PC-9 (cell line): ENCODE measurements at regions of chr7 and their contacts with region 1.

Region 1: DNA sequence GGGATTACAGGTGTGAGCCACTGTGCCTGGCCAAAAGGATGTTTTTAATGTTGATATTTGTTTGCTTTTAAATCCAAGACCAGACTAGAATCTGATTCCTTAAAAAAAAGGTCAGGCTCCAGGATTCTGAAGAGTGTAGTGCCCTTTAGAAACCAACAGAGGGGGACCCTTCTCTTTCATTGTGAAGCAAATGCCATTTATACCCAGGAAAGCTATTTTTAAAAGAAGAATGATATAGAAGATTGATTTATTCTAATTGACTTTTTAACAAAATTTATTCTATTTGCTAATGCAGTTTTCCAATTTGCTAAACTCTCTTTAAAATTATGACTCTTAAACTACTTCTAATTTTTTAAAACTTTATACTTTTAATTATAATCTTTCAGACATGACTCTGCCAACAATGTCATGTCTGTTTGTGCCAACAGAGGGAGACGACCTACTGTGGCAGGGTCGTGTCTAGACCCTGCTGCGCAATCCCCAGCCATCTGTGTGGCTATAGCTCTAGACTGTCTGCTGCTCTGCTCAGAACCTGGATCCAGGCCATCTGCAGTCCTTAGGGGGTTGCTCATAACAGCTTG is 201.0 kb upstream of the IMMP2L start:
- DNase-seq: no peak
- H3K4me3 ChIP-seq: no peak overlapping the region
- H3K27ac ChIP-seq: no peak overlapping the region
- H3K4me1 ChIP-seq: no peaks in the 10 kb centered on the region
- H3K27me3 ChIP-seq: no peaks in the 10 kb centered on the region
- CTCF ChIP-seq: peak; percentile 88

Region 2: DNA sequence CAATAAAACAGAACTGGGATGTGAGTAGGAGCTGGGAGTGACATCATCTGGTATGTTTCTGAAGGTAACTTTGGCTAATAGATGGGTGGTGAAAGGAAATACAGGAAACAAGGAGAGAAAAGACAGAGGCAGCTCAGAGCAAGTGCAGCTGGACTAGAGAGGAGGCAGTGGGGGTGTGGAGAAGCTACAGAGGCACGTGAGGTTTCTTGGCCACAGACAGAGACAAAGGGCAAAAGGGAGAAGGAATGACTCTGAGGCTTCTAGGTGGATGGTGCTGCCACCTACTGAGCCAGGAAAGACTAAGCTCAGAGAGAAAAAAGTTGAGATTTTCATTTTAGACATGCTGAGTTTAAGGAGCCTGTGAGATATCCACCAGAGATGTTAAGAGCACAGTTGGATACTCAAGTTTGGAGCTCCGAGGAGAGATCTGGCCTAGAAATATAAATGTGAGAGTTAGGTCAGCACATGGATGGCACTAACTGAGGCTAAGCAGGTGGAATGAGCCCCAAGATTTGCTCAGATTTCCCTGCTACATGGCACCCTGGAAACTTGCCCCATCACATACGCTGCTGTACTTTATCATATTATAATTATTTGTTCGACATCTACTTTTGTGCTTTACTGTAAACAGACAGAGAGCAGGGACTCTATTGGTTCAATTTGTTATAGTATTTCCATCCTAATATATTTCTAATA is 92.0 kb after region 1 on chr7:
- CTCF ChIA-PET with region 1: interaction called, 17 read pairs
- POLR2A ChIA-PET with region 1: no interaction called
- intact Hi-C with region 1: loop called (anchors 1 kb)
- DNase-seq: peak in 1 of 2 experiments; percentile 28
- H3K4me3 ChIP-seq: no peak overlapping the region
- H3K27ac ChIP-seq: no peak overlapping the region
- H3K4me1 ChIP-seq: no peaks in the 10 kb centered on the region
- H3K27me3 ChIP-seq: no peaks in the 10 kb centered on the region
- CTCF ChIP-seq: peak; percentile 60

Region 3: DNA sequence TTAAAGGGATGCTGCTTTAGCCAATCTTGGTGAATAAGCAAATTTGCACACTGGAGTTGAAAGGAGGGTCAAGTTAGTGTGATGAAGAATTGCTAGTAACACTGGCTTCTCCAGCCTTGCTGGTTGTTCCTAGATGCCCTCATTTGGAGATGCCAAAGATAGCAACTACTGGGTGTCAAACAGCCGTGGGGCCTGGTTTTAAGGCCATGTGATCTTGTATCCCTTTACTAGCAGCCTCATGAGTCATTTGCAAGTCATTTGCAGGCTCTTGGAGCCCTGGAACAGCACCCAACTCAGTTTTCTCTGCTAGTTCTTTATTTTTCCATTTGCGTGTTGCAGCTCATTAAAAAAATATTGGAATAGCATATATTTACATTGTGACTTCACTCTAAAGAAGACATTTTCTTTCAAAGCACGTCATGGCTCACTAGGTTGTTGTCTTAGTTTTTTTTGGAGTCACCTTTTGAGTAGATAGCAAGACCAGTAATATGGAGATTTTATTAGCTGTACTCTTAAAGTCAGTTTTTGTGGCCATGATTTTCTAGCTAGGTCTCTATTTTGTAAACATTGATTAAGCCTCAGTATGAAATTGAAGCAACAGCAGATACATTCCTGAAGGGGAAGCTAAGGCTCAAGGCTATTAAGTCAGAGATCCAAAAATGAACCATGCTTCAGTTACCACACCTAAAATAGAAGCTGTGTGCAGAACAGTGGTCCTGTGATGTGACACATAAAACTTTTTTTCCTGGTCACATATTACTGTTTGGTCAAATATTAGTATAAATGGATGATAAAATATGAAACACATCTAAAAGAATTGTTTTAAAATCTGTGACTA is 718.7 kb after region 1 on chr7:
- CTCF ChIA-PET with region 1: no interaction called
- POLR2A ChIA-PET with region 1: no interaction called
- intact Hi-C with region 1: no loop called
- DNase-seq: peak; percentile 83 to 93
- H3K4me3 ChIP-seq: no peak overlapping the region
- H3K27ac ChIP-seq: peak overlapping the region; percentile 48
- H3K4me1 ChIP-seq: peaks cover 35% of the 10 kb centered on the region
- H3K27me3 ChIP-seq: no peaks in the 10 kb centered on the region
- CTCF ChIP-seq: no peak